ENCODE measurements at regions of chr21 and their contacts with region 1.

Region 1: GRCh38 chr21:45554477-45555175 is 12.4 kb upstream of the SLC19A1 start:
- DNase-seq: peak; percentile 75
- H3K4me3 ChIP-seq: peak overlapping the region; percentile 48 to 74 (median 70)
- H3K27ac ChIP-seq: peak overlapping the region; percentile 39
- H3K4me1 ChIP-seq: peaks cover 28% of the 10 kb centered on the region
- H3K27me3 ChIP-seq: peaks cover 0 to 5% of the 10 kb centered on the region in 2 experiments
- CTCF ChIP-seq: peak; percentile 70 to 85
- POLR2A ChIP-seq: peak; percentile 20

Region 2: GRCh38 chr21:45287438-45288391 is 266.9 kb before region 1 on chr21 and contains the start of gene POFUT2:
- CTCF ChIA-PET with region 1: interaction called, 3 read pairs
- POLR2A ChIA-PET with region 1: no interaction called
- dilution Hi-C with region 1: no loop called
- intact Hi-C with region 1: loop called (anchors 1 kb)
- DNase-seq: peak; percentile 97
- H3K4me3 ChIP-seq: peak within 1 kb of the TSS; percentile 67 to 93 (median 79)
- H3K27ac ChIP-seq: peak within 1 kb of the TSS; percentile 56
- H3K4me1 ChIP-seq: peaks cover 20% of the 10 kb centered on the region
- H3K27me3 ChIP-seq: no peaks in the 10 kb centered on the region
- CTCF ChIP-seq: peak in 1 of 2 donors; percentile 2
- POLR2A ChIP-seq: peak; percentile 89
- total RNA-seq, gene POFUT2: 47.5 and 48.9 TPM in 2 replicates

Region 3: DNA sequence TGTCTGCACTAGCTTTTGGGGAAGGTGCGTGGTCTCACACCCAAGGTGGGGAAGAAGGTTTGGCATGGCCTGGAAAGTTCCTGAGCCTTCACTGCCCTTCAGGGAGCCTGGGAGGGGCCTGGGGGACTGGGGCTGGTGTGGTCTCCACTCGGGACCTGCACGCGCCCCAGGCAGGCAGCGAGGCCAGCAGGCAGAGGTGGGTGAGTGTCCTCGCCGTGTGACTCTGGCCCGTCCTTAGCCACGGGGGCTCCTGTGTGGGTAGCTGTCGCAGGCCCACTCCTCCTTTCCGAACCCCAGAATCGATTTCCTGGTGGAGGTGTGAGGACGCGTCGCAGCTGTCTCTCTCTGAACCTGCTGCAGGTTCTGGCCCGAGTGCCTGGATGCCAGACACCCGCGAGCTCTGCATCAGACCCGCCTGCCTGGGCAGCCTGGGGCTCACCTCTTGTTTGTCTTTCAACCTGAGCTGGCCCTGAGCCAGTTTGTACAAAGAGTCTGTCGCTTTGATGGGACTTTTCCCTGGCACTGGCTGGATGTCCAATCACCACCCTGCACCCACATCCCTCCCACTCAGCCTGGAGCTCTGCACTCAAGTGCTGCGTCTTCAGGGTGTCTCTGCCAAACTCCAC is 23.7 kb after region 1 on chr21:
- CTCF ChIA-PET with region 1: interaction called, 15 read pairs
- POLR2A ChIA-PET with region 1: no interaction called
- dilution Hi-C with region 1: no loop called
- intact Hi-C with region 1: no loop called
- DNase-seq: no peak
- H3K4me3 ChIP-seq: no peak overlapping the region
- H3K27ac ChIP-seq: no peak overlapping the region
- H3K4me1 ChIP-seq: no peaks in the 10 kb centered on the region
- H3K27me3 ChIP-seq: peaks cover 2 to 3% of the 10 kb centered on the region in 2 experiments
- CTCF ChIP-seq: no peak
- POLR2A ChIP-seq: no peak

Region 4: DNA sequence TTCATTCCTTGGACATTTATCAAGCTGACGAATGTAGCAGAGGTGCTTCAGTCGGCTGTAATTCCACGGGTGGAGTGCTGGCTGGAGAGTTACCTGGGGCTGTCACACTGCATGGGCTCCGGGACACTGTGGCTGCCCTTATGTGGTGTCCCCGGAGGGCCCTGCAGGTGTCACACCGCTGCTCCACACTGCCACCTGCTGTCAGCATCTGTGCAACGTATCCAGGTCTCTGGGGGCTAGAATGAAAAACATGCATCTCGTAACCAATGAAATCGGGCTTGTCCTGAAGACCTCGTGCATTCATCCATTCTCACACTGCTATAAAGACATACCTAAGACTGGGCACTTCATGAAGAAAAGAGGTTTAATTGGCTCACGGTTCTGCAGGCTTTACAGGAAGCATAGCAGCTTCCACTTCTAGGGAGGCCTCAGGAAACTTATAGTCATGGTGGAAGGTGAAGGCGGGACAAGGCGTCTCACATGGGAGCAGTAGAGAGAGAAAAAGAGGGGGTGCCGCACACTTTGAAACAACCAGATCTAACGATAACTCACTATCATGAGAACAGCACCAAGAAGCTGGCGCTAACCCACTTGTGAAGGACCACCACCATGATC is 42.2 kb after region 1 on chr21:
- CTCF ChIA-PET with region 1: interaction called, 103 read pairs
- POLR2A ChIA-PET with region 1: no interaction called
- dilution Hi-C with region 1: no loop called
- intact Hi-C with region 1: loop called (anchors 1 kb)
- DNase-seq: peak; percentile 60
- H3K4me3 ChIP-seq: no peak overlapping the region
- H3K27ac ChIP-seq: no peak overlapping the region
- H3K4me1 ChIP-seq: no peaks in the 10 kb centered on the region
- H3K27me3 ChIP-seq: no peaks in the 10 kb centered on the region
- CTCF ChIP-seq: peak; percentile 78 to 92
- POLR2A ChIP-seq: no peak

Region 5: GRCh38 chr21:45820171-45821091 is 265.8 kb after region 1 on chr21:
- CTCF ChIA-PET with region 1: interaction called, 46 read pairs
- POLR2A ChIA-PET with region 1: no interaction called
- dilution Hi-C with region 1: no loop called
- intact Hi-C with region 1: loop called (anchors 1 kb)
- DNase-seq: peak; percentile 60
- H3K4me3 ChIP-seq: no peak overlapping the region
- H3K27ac ChIP-seq: no peak overlapping the region
- H3K4me1 ChIP-seq: no peaks in the 10 kb centered on the region
- H3K27me3 ChIP-seq: peaks cover 3 to 4% of the 10 kb centered on the region in 2 experiments
- CTCF ChIP-seq: peak; percentile 77 to 87
- POLR2A ChIP-seq: no peak

Measured in endothelial cell of umbilical vein (primary cell).